A549 (cell line): ENCODE measurements at regions of chr20 and their contacts with region 1.

Region 1: GRCh38 chr20:45392733-45393132 is 14.6 kb upstream of the TP53TG5 start:
- DNase-seq: no peak
- ATAC-seq: no peak; a peak in 1 of 6 replicates
- H3K4me3 ChIP-seq: no peak overlapping the region
- H3K27ac ChIP-seq: no peak overlapping the region
- H3K4me1 ChIP-seq: no peaks in the 10 kb centered on the region
- CTCF ChIP-seq: peak; percentile 21; the same call in 1 of the 3 replicates
- EP300 ChIP-seq: no peak
- POLR2A ChIP-seq: no peak
- RAD21 ChIP-seq: 0 out of 5 replicates have a peak, but pooled peaks have one; percentile 13 to 20

Region 2: GRCh38 chr20:45406259-45407066 is 13.7 kb after region 1 on chr20:
- CTCF ChIA-PET with region 1: interaction called, 11 read pairs
- POLR2A ChIA-PET with region 1: interaction called, 4 read pairs
- DNase-seq: peak in 1 of 2 experiments; percentile 25
- ATAC-seq: peak; percentile 48 to 75; a peak in 5 of 6 replicates
- H3K4me3 ChIP-seq: peak overlapping the region; percentile 96
- H3K27ac ChIP-seq: peak overlapping the region; percentile 83 to 91
- H3K4me1 ChIP-seq: peaks cover 4% of the 10 kb centered on the region; the same call in 1 of the 3 replicates
- CTCF ChIP-seq: no peak
- EP300 ChIP-seq: no peak
- POLR2A ChIP-seq: no peak
- RAD21 ChIP-seq: no peak

Region 3: GRCh38 chr20:45495501-45495941 is 102.8 kb after region 1 on chr20:
- CTCF ChIA-PET with region 1: no interaction called
- POLR2A ChIA-PET with region 1: no interaction called
- DNase-seq: no peak
- ATAC-seq: no peak
- H3K4me3 ChIP-seq: no peak overlapping the region
- H3K27ac ChIP-seq: no peak overlapping the region
- H3K4me1 ChIP-seq: no peaks in the 10 kb centered on the region
- CTCF ChIP-seq: no peak
- EP300 ChIP-seq: no peak
- POLR2A ChIP-seq: no peak
- RAD21 ChIP-seq: no peak